ENCODE measurements at regions of chrX and their contacts with region 1.

Region 1: DNA sequence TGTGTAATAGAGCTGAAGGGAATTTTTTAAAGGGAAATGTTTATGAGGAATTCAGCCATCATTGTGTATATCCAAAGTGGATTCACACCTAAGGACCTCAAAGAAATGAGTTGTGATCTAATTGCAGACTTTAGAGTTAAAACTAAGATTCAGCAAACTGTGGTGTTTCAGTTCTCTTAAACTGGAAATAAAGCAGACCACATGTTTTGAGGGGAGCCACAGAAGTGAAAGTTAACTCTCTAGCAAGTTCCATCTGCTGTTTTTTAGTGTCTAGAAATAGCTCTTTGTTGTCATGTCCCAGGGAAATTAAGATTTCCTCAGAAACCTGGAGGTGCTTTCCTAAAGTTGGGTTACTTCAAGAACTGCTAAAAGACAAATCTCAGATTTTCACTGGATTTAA is 97.3 kb upstream of the DDX3X start:
- DNase-seq: no peak
- ATAC-seq: no peak
- H3K4me3 ChIP-seq: no peak overlapping the region
- H3K27ac ChIP-seq: no peak overlapping the region
- H3K4me1 ChIP-seq: no peaks in the 10 kb centered on the region
- H3K27me3 ChIP-seq: no peaks in the 10 kb centered on the region
- CTCF ChIP-seq: no peak
- POLR2A ChIP-seq: no peak

Region 2: DNA sequence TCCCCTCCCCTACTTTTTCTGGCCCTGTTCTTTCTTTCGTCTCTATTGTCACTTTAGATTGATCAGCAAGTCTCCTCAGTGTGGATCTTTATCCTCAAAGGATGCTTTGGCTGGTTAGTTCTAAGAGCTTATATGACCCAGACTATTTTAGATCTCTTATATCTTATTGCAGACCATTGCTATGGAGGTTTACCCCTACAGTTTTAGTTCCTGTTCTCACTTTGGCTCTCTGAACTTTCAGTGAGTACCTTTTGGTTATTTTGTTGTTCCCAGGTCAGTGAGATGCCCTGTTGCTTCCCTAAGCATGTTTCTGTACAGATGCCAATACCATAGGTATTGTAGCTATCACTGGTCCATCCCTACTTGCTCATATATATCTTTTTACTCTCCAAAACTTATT is 477.3 kb before region 1 on chrX:
- in situ Hi-C with region 1: no loop called
- intact Hi-C with region 1: no loop called
- DNase-seq: no peak
- ATAC-seq: no peak
- H3K4me3 ChIP-seq: no peak overlapping the region
- H3K27ac ChIP-seq: no peak overlapping the region
- H3K4me1 ChIP-seq: peaks cover 13 to 17% of the 10 kb centered on the region in 2 donors
- H3K27me3 ChIP-seq: peaks cover 0 to 3% (median 0%) of the 10 kb centered on the region in 3 donors
- CTCF ChIP-seq: no peak
- POLR2A ChIP-seq: no peak

Region 3: DNA sequence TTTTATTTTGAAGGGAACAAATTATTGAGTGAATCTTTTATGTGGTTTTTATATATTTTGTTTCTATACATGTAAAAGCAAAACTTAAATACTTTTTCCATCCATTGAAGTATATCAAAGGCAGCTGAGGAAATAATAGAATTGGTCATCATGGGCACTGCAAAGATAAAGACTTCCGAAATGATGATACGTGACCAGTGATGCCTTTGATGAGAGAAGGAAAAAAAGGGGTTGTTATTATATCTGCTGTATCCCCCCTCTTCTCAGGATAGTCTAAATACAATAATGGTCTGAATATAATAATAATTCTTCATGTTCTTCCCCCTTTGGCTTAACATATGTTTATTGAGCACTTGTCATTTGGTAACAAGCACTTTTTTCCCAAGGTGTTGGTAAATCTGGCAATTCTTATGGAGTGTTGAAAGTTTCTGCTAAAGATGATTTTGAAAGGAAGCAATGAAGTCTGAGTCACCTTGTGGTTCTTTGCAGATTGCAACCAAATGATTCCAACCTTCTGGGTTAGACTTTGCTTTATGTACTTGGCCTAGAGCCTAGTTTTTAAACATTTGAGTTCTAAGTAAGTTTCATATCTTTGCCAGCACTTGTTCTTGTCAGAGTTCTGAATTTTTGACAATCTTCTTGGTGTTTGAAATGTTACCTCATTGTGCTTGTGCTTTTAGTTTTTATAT is 90.6 kb before region 1 on chrX:
- in situ Hi-C with region 1: loop called in 1 of 4 experiments (anchors 25 kb)
- intact Hi-C with region 1: no loop called
- DNase-seq: no peak
- ATAC-seq: no peak
- H3K4me3 ChIP-seq: no peak overlapping the region
- H3K27ac ChIP-seq: no peak overlapping the region
- H3K4me1 ChIP-seq: no peaks in the 10 kb centered on the region
- H3K27me3 ChIP-seq: no peaks in the 10 kb centered on the region
- CTCF ChIP-seq: no peak
- POLR2A ChIP-seq: no peak

Region 4: GRCh38 chrX:41178201-41178600 is 58.4 kb before region 1 on chrX:
- in situ Hi-C with region 1: no loop called
- intact Hi-C with region 1: loop called (anchors 10 kb)
- DNase-seq: no peak
- ATAC-seq: no peak
- H3K4me3 ChIP-seq: no peak overlapping the region
- H3K27ac ChIP-seq: no peak overlapping the region
- H3K4me1 ChIP-seq: peaks cover 0 to 4% of the 10 kb centered on the region in 2 donors
- H3K27me3 ChIP-seq: no peaks in the 10 kb centered on the region
- CTCF ChIP-seq: no peak
- POLR2A ChIP-seq: no peak

Measured in gastrocnemius medialis (tissue), 4 donors.